ENCODE measurements at regions of chr18 and their contacts with region 1.

Region 1: GRCh38 chr18:13558124-13558523 is 168.2 kb downstream of the FAM210A start:
- DNase-seq: peak; percentile 30
- ATAC-seq: peak; percentile 91
- H3K4me3 ChIP-seq: no peak overlapping the region
- H3K27ac ChIP-seq: no peak overlapping the region
- H3K4me1 ChIP-seq: no peaks in the 10 kb centered on the region
- H3K27me3 ChIP-seq: peaks cover 13% of the 10 kb centered on the region
- CTCF ChIP-seq: peak; percentile 77

Region 2: GRCh38 chr18:13629841-13630715 is 72.0 kb after region 1 on chr18:
- CTCF ChIA-PET with region 1: no interaction called
- POLR2A ChIA-PET with region 1: no interaction called
- in situ Hi-C with region 1: no loop called
- intact Hi-C with region 1: loop called (anchors 5 kb)
- DNase-seq: peak; percentile 17
- ATAC-seq: peak; percentile 96
- H3K4me3 ChIP-seq: no peak overlapping the region
- H3K27ac ChIP-seq: no peak overlapping the region
- H3K4me1 ChIP-seq: no peaks in the 10 kb centered on the region
- H3K27me3 ChIP-seq: no peaks in the 10 kb centered on the region
- CTCF ChIP-seq: peak; percentile 80

Region 3: GRCh38 chr18:13800505-13801259 is 242.6 kb after region 1 on chr18:
- CTCF ChIA-PET with region 1: no interaction called
- POLR2A ChIA-PET with region 1: no interaction called
- in situ Hi-C with region 1: no loop called
- intact Hi-C with region 1: loop called (anchors 10 kb)
- DNase-seq: no peak
- ATAC-seq: peak; percentile 100
- H3K4me3 ChIP-seq: peak overlapping the region; percentile 28 to 63
- H3K27ac ChIP-seq: no peak overlapping the region
- H3K4me1 ChIP-seq: no peaks in the 10 kb centered on the region; the same call in 1 of the 2 replicates
- H3K27me3 ChIP-seq: peaks cover 2% of the 10 kb centered on the region; the same call in 1 of the 2 replicates
- CTCF ChIP-seq: peak; percentile 88

Measured in Panc1 (cell line).